Activated CD4-positive, alpha-beta T cell treated with anti-CD3 and anti-CD28 coated beads for 36 hours (primary cell): ENCODE measurements at regions of chr4 and their contacts with region 1.

Region 1: DNA sequence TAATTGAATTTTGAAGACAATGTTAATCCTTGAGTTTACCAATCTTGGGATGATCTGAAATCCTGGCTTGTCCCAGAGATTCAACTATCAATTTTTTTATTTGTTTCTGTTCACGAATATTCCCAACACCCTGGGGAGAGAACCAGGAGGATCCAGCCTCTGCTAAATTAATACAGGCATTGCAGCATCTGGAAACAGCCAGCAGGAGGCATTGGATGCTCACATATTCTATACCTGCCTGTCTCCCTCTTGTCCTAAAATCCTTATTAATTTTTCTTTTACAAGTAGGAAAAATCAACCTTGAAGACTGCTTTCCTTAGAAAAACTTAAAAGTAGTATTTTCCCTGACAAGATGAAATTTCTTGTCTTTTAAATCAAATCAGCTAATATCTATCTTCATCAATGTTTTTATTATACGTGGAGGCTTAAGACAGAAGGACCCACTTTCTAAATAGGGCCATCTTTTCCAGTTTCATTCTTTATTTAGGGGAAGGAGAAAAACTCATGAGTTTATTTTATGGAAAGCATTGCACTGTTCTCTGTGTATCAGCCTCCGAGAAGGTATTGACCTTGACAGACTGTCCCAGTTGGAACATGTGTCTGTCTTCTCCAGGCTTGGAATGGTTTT is 102.4 kb downstream of the CLNK start:
- DNase-seq: peak; percentile 38
- ATAC-seq: no peak
- H3K4me3 Mint-ChIP-seq: no peak overlapping the region
- H3K27ac Mint-ChIP-seq: no peak overlapping the region
- H3K4me1 Mint-ChIP-seq: peaks cover 18% of the 10 kb centered on the region
- H3K27me3 Mint-ChIP-seq: no peaks in the 10 kb centered on the region

Region 2: GRCh38 chr4:9952415-9952950 is 629.7 kb before region 1 on chr4:
- CTCF ChIA-PET with region 1: no interaction called
- POLR2A ChIA-PET with region 1: no interaction called
- intact Hi-C with region 1: no loop called
- DNase-seq: no peak
- ATAC-seq: no peak
- H3K4me3 Mint-ChIP-seq: no peak overlapping the region
- H3K27ac Mint-ChIP-seq: no peak overlapping the region
- H3K4me1 Mint-ChIP-seq: no peaks in the 10 kb centered on the region
- H3K27me3 Mint-ChIP-seq: no peaks in the 10 kb centered on the region

Region 3: GRCh38 chr4:10526429-10527222 is 55.5 kb before region 1 on chr4:
- CTCF ChIA-PET with region 1: no interaction called
- POLR2A ChIA-PET with region 1: no interaction called
- intact Hi-C with region 1: no loop called
- DNase-seq: peak; percentile 6
- ATAC-seq: no peak
- H3K4me3 Mint-ChIP-seq: no peak overlapping the region
- H3K27ac Mint-ChIP-seq: no peak overlapping the region
- H3K4me1 Mint-ChIP-seq: no peaks in the 10 kb centered on the region
- H3K27me3 Mint-ChIP-seq: no peaks in the 10 kb centered on the region

Region 4: DNA sequence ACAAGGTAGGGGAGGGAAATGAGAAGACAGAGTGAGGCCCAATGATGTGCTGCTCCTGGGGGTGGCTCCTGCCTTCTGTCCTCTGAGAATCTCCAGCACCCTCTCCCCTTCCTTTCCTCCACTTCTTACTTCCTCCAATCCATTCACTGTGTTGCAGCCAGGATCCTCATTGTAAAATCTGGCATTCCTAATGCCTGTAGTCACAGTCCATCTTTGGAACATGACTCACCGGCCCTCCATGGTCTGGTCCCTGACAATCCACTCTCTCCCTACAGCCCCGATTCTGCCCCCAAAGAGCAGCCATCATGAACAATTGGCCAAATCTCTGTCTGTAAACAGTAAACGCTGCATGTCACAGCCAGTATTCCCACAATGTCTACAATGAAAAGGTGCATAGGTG is 29.5 kb after region 1 on chr4:
- CTCF ChIA-PET with region 1: no interaction called
- POLR2A ChIA-PET with region 1: no interaction called
- intact Hi-C with region 1: no loop called
- DNase-seq: no peak
- ATAC-seq: no peak
- H3K4me3 Mint-ChIP-seq: no peak overlapping the region
- H3K27ac Mint-ChIP-seq: no peak overlapping the region
- H3K4me1 Mint-ChIP-seq: no peaks in the 10 kb centered on the region
- H3K27me3 Mint-ChIP-seq: no peaks in the 10 kb centered on the region

Region 5: GRCh38 chr4:10629394-10629793 is 47.2 kb after region 1 on chr4:
- CTCF ChIA-PET with region 1: no interaction called
- POLR2A ChIA-PET with region 1: no interaction called
- intact Hi-C with region 1: no loop called
- DNase-seq: no peak
- ATAC-seq: no peak
- H3K4me3 Mint-ChIP-seq: no peak overlapping the region
- H3K27ac Mint-ChIP-seq: no peak overlapping the region
- H3K4me1 Mint-ChIP-seq: no peaks in the 10 kb centered on the region
- H3K27me3 Mint-ChIP-seq: no peaks in the 10 kb centered on the region

Region 6: DNA sequence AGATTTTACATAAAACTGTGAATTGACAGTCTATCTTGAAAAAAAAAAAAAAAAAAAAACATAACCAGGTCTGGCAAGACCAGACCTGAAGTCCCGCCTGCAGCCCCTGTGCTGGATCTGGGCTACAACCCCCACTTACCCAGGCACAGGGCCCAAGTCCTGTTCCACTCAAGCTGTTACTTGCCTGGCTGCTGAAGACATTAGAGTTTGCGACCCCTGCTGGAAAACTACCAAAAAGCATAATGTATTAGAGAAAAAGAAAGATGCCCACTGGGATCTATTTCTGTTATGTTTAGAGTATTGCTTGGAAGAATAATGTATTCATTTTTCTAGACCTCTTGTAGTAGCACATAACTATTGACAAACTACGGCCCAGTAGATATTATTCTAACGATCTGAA is 841.8 kb after region 1 on chr4:
- CTCF ChIA-PET with region 1: no interaction called
- POLR2A ChIA-PET with region 1: no interaction called
- intact Hi-C with region 1: loop called (anchors 1 to 5 kb)
- DNase-seq: peak; percentile 41
- ATAC-seq: no peak
- H3K4me3 Mint-ChIP-seq: no peak overlapping the region
- H3K27ac Mint-ChIP-seq: no peak overlapping the region
- H3K4me1 Mint-ChIP-seq: peaks cover 12% of the 10 kb centered on the region
- H3K27me3 Mint-ChIP-seq: peaks cover 21% of the 10 kb centered on the region

Region 7: GRCh38 chr4:11720292-11720691 is 1138.1 kb after region 1 on chr4:
- CTCF ChIA-PET with region 1: no interaction called
- POLR2A ChIA-PET with region 1: no interaction called
- intact Hi-C with region 1: loop called in 1 of 2 experiments (anchors 1 kb)
- DNase-seq: no peak
- ATAC-seq: no peak
- H3K4me3 Mint-ChIP-seq: no peak overlapping the region
- H3K27ac Mint-ChIP-seq: no peak overlapping the region
- H3K4me1 Mint-ChIP-seq: no peaks in the 10 kb centered on the region
- H3K27me3 Mint-ChIP-seq: peaks cover 17% of the 10 kb centered on the region